Heart right ventricle (tissue), 16 donors: ENCODE measurements at regions of chr7 and their contacts with region 1.

Region 1: GRCh38 chr7:121777672-121778071 is 95.3 kb upstream of the PTPRZ1 start:
- DNase-seq: no peak
- ATAC-seq: no peak
- H3K4me3 ChIP-seq: no peak overlapping the region
- H3K27ac ChIP-seq: no peak overlapping the region
- H3K4me1 ChIP-seq: no peaks in the 10 kb centered on the region
- H3K27me3 ChIP-seq: no peaks in the 10 kb centered on the region
- CTCF ChIP-seq: no peak

Region 2: DNA sequence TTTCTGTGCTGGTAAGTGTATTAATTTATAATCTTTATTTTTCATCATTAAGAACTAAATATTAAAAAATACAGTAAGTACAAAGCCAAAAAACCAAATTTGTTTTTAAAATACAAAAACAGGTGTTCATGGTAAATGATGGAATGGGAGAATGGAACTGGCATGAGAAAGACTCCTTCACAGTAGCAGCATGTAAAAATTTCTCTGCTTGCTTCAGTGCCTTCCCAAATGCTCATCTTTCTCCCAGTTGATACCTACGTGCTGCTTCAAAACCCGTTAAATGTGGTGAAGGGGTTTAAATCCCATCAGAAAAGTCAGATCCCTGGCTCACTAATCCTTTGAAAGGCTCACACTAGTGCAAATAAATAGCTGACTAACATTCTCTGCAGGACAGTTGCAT is 917.0 kb after region 1 on chr7:
- intact Hi-C with region 1: loop called in 1 of 10 experiments (anchors 5 kb)
- DNase-seq: no peak
- ATAC-seq: no peak
- H3K4me3 ChIP-seq: no peak overlapping the region
- H3K27ac ChIP-seq: no peak overlapping the region
- H3K4me1 ChIP-seq: no peaks in the 10 kb centered on the region
- H3K27me3 ChIP-seq: no peaks in the 10 kb centered on the region
- CTCF ChIP-seq: no peak